Prostate gland (tissue), 2 donors: ENCODE measurements at regions of chr13 and their contacts with region 1.

Region 1: GRCh38 chr13:97109841-97110492 is 112.2 kb upstream of the MBNL2 start:
- DNase-seq: peak; percentile 82
- H3K4me3 ChIP-seq: no peak overlapping the region
- H3K27ac ChIP-seq: no peak overlapping the region
- H3K4me1 ChIP-seq: no peaks in the 10 kb centered on the region
- H3K27me3 ChIP-seq: no peaks in the 10 kb centered on the region
- CTCF ChIP-seq: peak; percentile 83 to 98 (median 97)
- POLR2A ChIP-seq: no peak

Region 2: GRCh38 chr13:96984051-96984508 is 125.9 kb before region 1 on chr13:
- intact Hi-C with region 1: no loop called
- DNase-seq: peak; percentile 74
- H3K4me3 ChIP-seq: peak overlapping the region in 1 of 2 donors; percentile 17
- H3K27ac ChIP-seq: peak overlapping the region; percentile 58 to 60
- H3K4me1 ChIP-seq: no peaks in the 10 kb centered on the region
- H3K27me3 ChIP-seq: no peaks in the 10 kb centered on the region
- CTCF ChIP-seq: peak in 3 of 4 experiments; percentile 16 to 43 (median 42)
- POLR2A ChIP-seq: no peak

Region 3: DNA sequence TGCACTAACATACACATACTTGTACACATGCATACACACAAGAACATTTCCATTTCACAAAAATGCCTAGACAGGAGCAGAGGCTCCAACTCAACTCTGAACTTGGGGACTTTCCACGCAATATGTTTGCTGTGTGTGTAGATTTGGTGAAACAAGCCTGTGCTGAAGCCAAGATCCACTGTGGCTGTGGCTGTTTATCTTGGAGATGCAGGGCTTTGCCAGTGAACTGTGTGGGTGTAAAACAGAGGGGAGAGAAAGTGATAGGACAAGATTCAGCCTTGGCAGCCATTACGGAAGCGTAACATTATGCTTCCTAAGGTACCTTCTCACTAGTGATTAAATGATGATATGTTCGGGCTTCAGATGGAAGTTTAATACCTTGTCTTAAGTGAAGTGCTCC is 38.9 kb after region 1 on chr13:
- intact Hi-C with region 1: no loop called
- DNase-seq: no peak
- H3K4me3 ChIP-seq: no peak overlapping the region
- H3K27ac ChIP-seq: no peak overlapping the region
- H3K4me1 ChIP-seq: no peaks in the 10 kb centered on the region
- H3K27me3 ChIP-seq: no peaks in the 10 kb centered on the region
- CTCF ChIP-seq: no peak
- POLR2A ChIP-seq: no peak

Region 4: GRCh38 chr13:97212601-97213040 is 102.7 kb after region 1 on chr13:
- intact Hi-C with region 1: loop called (anchors 2 kb)
- DNase-seq: no peak
- H3K4me3 ChIP-seq: no peak overlapping the region
- H3K27ac ChIP-seq: no peak overlapping the region
- H3K4me1 ChIP-seq: no peaks in the 10 kb centered on the region
- H3K27me3 ChIP-seq: no peaks in the 10 kb centered on the region
- CTCF ChIP-seq: peak in 3 of 4 experiments; percentile 18 to 44 (median 40)
- POLR2A ChIP-seq: no peak

Region 5: DNA sequence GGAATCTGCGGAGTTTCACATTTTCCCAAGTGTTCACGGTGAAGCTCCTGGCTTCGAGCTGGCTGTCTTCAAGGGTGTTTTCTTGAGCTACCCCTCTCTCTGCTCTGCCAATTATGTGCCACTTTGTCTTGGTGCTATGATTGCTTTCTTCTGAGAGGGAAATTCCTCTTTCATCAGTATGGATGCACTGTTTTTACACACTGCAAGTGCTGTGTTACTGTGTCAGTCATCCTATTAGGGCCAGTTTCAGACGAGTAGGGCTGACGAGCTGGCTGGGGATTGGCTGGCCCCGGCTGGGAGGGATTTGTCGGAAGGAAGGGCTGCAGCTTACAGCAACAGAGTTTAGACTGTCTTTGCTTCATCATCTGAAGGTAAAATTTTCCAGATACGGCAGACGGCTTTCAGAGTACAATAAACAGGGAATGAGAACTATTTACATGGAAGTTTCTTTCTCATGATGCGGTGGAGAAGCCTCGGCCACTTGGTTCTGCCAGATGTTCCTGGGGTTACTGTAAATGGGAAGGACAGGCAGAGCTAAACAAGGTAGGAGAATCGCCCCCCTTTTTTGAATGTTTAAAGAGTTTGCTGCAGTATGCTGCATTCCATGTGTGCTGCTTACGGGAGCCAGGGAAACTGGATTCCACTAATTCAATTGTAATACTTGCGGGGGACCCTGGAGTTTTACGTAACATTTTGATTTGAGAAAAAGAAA is 112.2 kb after region 1 on chr13 and contains the start of gene MBNL2:
- intact Hi-C with region 1: loop called (anchors 2 kb)
- DNase-seq: peak; percentile 95
- H3K4me3 ChIP-seq: peak within 1 kb of the TSS; percentile 35 to 45
- H3K27ac ChIP-seq: peak within 1 kb of the TSS; percentile 85
- H3K4me1 ChIP-seq: peaks cover 4% of the 10 kb centered on the region
- H3K27me3 ChIP-seq: no peaks in the 10 kb centered on the region
- CTCF ChIP-seq: no peak
- POLR2A ChIP-seq: peak; percentile 89
- total RNA-seq, gene MBNL2: 59.1 to 85.7 TPM

Region 6: DNA sequence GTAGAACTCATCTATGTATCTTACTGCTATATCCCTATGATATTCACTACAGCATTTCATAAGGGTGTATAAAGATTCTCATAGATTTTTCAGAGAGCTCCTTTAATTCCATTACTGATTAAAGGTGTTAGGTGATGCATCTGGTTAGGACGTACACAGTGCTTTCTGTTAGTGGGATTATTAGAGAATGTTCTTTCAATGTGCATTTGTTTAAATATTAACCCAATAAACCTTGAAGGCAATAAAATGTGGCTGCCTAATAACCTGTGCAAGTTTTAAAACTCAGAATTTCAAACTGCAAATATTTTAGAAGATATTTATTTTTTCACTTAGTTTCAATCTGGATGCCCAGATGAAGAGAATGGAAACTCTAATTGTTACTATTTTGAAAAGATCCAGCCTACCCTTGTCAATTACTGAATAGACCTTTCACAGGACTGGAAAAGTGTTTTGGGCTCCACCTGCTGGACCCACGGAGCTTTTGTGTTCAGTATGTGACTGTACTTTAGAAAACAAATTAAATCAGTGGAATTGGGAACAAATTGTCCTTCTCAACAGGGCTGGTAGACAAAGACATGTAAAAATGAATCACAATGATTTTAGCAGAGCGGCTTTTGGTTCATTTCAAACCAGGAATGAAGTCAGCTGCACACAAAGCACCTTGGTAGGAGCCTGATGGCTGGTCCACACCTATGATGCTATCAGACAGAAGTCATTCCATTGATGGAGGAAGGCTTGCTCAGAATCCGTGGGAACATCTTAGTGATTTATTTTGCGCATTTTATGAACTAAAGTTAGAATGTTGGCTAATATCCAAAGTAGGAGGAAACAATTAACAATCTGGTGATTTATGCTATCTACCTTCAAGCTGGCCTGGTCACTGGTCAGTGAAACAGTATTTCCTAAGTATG is 234.6 kb after region 1 on chr13:
- intact Hi-C with region 1: loop called (anchors 5 kb)
- DNase-seq: peak; percentile 42
- H3K4me3 ChIP-seq: no peak overlapping the region
- H3K27ac ChIP-seq: no peak overlapping the region
- H3K4me1 ChIP-seq: no peaks in the 10 kb centered on the region
- H3K27me3 ChIP-seq: no peaks in the 10 kb centered on the region
- CTCF ChIP-seq: peak; percentile 33 to 73 (median 59)
- POLR2A ChIP-seq: no peak

Region 7: DNA sequence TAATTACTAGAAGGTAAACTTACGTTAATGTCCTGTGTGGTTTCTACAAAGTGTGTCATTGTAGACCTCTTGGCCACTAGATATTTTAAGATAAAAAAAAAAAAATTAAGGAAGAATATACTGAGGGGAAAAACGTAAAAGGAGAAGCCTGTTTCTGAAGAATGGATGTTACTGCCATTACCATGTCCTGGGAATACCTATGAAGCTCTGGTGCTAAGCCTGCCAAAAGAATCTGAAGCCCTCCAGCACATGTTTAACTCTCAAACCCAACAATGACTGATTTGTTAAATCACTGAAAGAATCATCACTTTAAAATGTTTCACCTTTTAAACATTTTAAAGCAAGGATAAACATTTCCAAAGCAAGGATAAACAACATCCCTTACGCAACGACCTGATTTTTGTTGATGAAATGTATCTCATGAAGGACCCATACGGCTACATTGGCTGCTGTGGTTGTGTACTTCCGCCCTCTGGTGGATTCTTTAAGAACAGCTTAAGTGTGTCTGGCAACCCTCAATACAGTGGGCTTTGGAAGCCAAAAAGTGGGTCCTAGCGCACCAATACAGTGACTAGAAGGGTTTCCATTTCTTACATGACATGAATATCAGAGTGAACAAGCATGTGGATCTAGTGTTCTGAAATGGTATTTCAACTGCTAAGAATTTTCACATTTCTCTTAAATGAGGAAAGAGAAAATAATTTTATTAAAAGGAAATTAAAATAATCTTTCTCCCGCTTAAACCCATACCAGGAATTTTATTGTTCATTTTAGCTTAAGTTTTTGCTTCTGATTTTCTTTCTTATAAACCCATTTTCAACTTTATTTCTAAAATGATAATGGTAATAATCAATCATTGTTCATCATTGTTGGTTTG is 249.5 kb after region 1 on chr13:
- intact Hi-C with region 1: loop called (anchors 5 kb)
- DNase-seq: peak; percentile 54
- H3K4me3 ChIP-seq: no peak overlapping the region
- H3K27ac ChIP-seq: no peak overlapping the region
- H3K4me1 ChIP-seq: no peaks in the 10 kb centered on the region
- H3K27me3 ChIP-seq: no peaks in the 10 kb centered on the region
- CTCF ChIP-seq: peak; percentile 32 to 78 (median 72)
- POLR2A ChIP-seq: no peak

Region 8: GRCh38 chr13:97432917-97433726 is 323.2 kb after region 1 on chr13:
- intact Hi-C with region 1: loop called (anchors 5 kb)
- DNase-seq: peak; percentile 99
- H3K4me3 ChIP-seq: peak overlapping the region; percentile 77 to 80
- H3K27ac ChIP-seq: peak overlapping the region; percentile 100
- H3K4me1 ChIP-seq: no peaks in the 10 kb centered on the region
- H3K27me3 ChIP-seq: no peaks in the 10 kb centered on the region
- CTCF ChIP-seq: peak in 1 of 4 experiments; percentile 8
- POLR2A ChIP-seq: peak; percentile 55

Region 9: DNA sequence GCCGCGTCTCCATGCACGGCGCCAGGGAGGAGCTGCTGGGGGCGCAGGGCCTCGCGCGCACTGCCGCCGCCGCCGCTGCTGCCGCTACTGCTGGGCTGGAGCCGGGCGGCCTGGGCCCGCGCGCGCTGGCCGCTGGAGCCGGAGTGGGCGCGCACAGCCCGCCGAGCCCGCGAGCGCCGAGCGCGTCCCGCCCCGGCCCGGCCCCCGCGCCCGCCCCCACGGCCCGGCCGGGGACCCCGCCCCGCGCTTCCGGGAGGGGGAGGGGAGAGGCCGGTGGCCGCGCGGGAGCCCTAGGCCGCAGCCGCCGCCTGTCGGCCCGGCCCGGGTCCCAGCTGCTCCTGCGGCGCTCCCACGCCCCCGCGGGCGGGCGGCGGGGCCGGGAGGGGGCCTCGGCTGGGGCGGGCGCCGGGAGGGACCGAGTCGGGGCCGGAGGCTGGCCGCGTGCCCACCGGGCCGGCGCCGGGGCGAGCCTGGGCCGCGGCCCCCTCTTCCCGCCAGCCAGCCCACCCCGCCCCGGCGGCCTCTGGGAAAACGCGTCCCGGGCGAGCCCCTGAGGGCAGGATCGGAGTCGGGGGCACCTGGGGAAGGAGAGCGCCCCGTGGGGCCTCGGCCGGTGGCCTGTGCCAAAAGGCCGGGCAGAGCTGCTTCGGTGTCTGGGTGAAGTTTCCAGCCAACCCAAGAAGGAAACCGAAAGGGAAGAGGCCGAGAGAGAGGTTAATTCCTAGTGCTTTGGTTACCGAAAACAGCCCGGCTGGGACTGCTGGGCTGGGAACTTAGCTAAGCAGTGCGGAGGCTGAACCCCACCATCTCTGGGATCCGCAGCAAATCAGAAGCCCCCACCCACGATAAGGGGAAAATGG is 1467.2 kb after region 1 on chr13 and contains the start of gene STK24:
- intact Hi-C with region 1: loop called (anchors 10 kb)
- DNase-seq: peak; percentile 65
- H3K4me3 ChIP-seq: peak within 1 kb of the TSS; percentile 92
- H3K27ac ChIP-seq: peak within 1 kb of the TSS; percentile 96 to 97
- H3K4me1 ChIP-seq: no peaks in the 10 kb centered on the region
- H3K27me3 ChIP-seq: no peaks in the 10 kb centered on the region
- CTCF ChIP-seq: no peak
- POLR2A ChIP-seq: peak; percentile 11
- total RNA-seq, gene STK24: 80.5 to 187 TPM